Heart left ventricle (tissue), 16 donors: ENCODE measurements at regions of chr5 and their contacts with region 1.

Region 1: DNA sequence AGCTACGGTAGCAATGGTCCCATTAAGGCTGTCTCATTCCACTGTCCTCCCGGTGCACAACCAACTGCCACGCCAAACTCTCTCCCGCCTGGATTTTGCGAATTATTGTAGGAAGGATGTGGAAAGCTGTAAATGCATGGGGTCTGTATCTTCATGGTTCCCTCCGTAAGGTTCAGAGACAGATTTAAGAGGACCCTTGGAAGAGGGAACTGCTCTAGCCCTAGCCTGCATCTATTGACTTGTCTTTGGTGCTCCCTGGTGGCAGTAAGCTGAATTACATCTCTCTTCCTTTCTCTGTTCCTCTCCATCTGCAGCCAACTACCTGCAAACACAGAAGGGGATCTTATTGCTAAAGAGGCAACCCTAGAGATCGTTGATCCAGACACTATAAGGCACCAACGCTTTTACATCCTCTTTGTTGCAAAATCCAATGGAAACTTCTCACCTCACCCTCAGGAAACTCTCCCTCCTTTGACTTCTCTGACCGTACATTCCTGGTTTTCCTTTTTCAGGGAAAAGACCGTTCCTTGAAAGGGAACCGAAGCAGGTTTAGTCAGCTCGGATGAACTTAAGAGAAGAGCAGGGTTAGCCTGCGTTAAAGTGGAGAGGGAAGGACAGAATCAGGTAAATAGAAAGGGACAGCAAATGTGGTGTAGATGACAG is 11.9 kb downstream of the CAPSL start:
- DNase-seq: peak in 1 of 5 donors; percentile 10
- ATAC-seq: peak in 3 of 4 donors; percentile 71 to 77 (median 74)
- H3K4me3 ChIP-seq: peak overlapping the region in 1 of 12 donors; percentile 5
- H3K27ac ChIP-seq: no peak overlapping the region
- H3K4me1 ChIP-seq: peaks cover 0 to 13% (median 0%) of the 10 kb centered on the region in 12 donors
- H3K27me3 ChIP-seq: peaks cover 0 to 58% (median 15%) of the 10 kb centered on the region in 9 donors
- CTCF ChIP-seq: peak; percentile 71 to 92 (median 81)
- POLR2A ChIP-seq: no peak

Region 2: GRCh38 chr5:34486160-34486848 is 1440.2 kb before region 1 on chr5:
- intact Hi-C with region 1: loop called in 3 of 10 experiments (anchors 5 to 10 kb)
- DNase-seq: peak; percentile 65 to 85 (median 76)
- ATAC-seq: peak; percentile 45 to 88 (median 70)
- H3K4me3 ChIP-seq: no peak overlapping the region
- H3K27ac ChIP-seq: peak overlapping the region in 1 of 12 donors; percentile 36
- H3K4me1 ChIP-seq: peaks cover 0 to 11% (median 1%) of the 10 kb centered on the region in 12 donors
- H3K27me3 ChIP-seq: peaks cover 0 to 4% (median 0%) of the 10 kb centered on the region in 9 donors
- CTCF ChIP-seq: peak; percentile 74 to 92 (median 85)
- POLR2A ChIP-seq: no peak

Region 3: DNA sequence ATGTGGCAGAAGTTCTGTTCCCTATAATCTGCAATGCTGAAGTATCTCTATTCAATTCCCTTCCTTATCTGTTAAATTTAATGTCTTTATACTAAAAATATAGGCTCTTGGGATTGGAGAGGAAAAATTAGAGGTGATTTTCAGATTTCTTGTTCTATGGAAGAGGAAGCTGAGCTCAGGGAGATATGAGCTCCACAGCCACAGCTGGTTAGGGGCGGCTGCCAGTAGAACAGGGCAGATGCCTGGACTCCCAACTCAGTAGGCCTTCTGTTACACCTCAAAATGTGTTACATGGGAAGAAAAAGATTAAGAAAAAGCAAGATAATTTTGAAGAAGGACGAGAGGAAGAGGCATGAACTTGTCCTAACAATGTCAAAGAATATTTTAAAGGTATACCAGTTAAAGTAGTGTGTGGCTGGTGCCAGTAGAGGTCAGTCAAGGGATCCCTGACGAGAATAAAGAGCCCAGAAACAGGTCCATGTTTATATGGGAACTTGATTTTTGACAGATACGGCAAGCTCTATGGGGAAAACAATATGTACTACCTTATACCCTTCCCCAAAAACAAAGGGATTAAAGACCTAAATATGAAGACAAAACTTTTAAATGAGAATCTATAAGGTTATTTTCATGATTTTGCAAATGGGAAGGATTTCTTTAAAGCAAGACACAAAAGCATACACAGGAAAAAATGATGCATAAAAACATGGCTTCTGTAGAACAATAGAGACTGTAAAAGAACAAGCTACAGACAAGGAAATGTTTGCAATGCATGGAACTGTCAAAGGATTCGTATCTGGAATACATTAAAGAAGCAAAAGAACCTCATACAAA is 968.4 kb before region 1 on chr5:
- intact Hi-C with region 1: loop called in 1 of 10 experiments (anchors 10 kb)
- DNase-seq: no peak
- ATAC-seq: peak in 3 of 4 donors; percentile 62 to 73 (median 65)
- H3K4me3 ChIP-seq: no peak overlapping the region
- H3K27ac ChIP-seq: no peak overlapping the region
- H3K4me1 ChIP-seq: no peaks in the 10 kb centered on the region
- H3K27me3 ChIP-seq: no peaks in the 10 kb centered on the region
- CTCF ChIP-seq: peak; percentile 19 to 60 (median 43)
- POLR2A ChIP-seq: no peak

Region 4: DNA sequence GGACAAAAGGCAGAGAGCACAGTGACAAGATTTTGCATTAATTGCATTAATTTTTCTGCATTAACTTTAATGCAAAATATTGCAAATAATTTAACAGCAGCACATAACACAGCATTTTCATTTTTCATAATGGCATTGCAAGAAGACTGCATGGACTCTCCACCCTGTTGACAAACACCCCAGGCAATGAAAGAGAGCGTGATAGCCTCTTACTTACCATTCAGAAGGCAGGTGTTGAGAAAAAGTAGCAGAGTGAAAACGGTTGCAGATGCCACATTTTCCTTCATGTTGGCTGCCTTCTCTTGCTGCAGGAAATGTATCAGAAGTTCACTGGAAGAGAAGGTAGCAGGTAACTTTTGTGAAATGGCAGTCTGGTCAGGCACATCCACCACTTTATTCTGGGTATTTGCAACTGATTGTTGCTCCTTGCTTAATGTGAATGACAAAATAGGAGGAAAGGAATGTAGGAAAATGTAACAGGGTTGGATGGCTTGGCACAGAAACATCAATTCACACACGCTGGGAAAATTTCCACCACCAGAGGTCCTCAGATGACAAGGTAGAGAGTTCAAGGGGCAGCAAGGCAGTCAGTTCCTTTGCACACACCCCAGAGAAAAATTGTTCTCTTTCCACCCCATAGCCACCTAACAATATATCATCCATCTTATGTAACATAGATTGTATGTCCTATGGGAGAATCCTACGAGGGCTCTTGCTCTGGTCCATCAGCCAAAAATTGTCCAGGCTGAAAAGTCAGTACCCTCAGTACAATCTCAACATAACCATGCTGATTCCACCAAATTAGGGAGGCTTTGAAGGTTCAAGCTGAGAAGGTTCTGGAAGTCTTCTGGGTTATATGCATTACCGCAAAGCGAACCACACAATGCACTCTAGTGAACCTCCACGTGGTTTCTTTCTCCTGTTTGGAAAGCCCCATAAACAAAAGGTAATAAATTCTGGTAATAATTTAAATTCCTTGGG is 836.9 kb before region 1 on chr5:
- intact Hi-C with region 1: loop called in 8 of 10 experiments (anchors 2 to 10 kb)
- DNase-seq: peak in 3 of 5 donors; percentile 15 to 29 (median 24)
- ATAC-seq: peak in 1 of 4 donors; percentile 7
- H3K4me3 ChIP-seq: no peak overlapping the region
- H3K27ac ChIP-seq: no peak overlapping the region
- H3K4me1 ChIP-seq: no peaks in the 10 kb centered on the region
- H3K27me3 ChIP-seq: no peaks in the 10 kb centered on the region
- CTCF ChIP-seq: peak; percentile 42 to 72 (median 58)
- POLR2A ChIP-seq: no peak

Region 5: GRCh38 chr5:35617435-35618303 is 308.9 kb before region 1 on chr5 and contains the start of gene SPEF2:
- intact Hi-C with region 1: loop called (anchors 1 to 10 kb)
- DNase-seq: peak; percentile 77 to 86 (median 81)
- ATAC-seq: peak; percentile 98 to 100 (median 100)
- H3K4me3 ChIP-seq: peak within 1 kb of the TSS; percentile 57 to 86 (median 78)
- H3K27ac ChIP-seq: peak within 1 kb of the TSS in 3 of 12 donors; percentile 18 to 39 (median 35)
- H3K4me1 ChIP-seq: peaks cover 0 to 17% (median 7%) of the 10 kb centered on the region in 12 donors
- H3K27me3 ChIP-seq: no peaks in the 10 kb centered on the region
- CTCF ChIP-seq: peak; percentile 54 to 93 (median 70)
- POLR2A ChIP-seq: no peak
- total RNA-seq, gene SPEF2: 0.69 to 4.1 (median 1.5) TPM

Region 6: DNA sequence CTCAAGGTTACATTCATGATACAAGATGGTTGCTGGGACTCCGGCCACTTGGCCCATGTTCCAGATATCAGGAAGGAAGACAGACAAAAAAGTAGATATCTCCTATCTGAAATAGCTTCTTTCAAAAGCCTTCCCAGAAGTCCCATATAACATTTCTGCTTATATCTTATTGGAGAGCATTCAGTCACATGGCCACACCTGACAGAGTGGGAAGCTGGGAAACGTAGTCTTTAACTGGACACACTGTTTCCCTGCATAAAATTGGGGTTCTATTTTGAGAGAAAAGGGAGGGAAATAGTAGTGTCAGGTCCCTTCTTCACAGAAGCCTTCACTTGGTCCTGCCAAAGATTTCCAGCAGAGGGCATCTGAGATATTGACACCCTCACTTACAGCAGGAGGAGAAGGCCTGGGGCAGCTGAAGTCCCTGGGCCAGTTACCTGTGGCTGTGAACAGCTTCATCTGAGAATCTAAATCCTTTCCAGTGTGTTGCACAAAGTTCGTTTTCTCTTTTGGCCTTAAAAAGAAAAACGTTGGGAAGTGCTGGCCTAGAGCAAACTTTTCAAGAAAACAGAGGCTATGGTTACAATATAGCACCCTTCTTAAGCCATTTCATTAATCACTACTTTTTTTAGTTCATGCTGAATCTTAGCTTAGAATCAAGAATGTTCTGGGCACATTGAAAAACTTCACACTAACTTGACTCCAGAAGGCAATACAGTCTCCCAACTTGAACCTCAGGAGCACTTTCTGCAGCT is 275.3 kb before region 1 on chr5:
- intact Hi-C with region 1: loop called in 7 of 10 experiments (anchors 5 to 10 kb)
- DNase-seq: peak in 1 of 5 donors; percentile 8
- ATAC-seq: no peak
- H3K4me3 ChIP-seq: no peak overlapping the region
- H3K27ac ChIP-seq: no peak overlapping the region
- H3K4me1 ChIP-seq: no peaks in the 10 kb centered on the region
- H3K27me3 ChIP-seq: no peaks in the 10 kb centered on the region
- CTCF ChIP-seq: peak in 10 of 12 donors; percentile 15 to 42 (median 26)
- POLR2A ChIP-seq: no peak

Region 7: DNA sequence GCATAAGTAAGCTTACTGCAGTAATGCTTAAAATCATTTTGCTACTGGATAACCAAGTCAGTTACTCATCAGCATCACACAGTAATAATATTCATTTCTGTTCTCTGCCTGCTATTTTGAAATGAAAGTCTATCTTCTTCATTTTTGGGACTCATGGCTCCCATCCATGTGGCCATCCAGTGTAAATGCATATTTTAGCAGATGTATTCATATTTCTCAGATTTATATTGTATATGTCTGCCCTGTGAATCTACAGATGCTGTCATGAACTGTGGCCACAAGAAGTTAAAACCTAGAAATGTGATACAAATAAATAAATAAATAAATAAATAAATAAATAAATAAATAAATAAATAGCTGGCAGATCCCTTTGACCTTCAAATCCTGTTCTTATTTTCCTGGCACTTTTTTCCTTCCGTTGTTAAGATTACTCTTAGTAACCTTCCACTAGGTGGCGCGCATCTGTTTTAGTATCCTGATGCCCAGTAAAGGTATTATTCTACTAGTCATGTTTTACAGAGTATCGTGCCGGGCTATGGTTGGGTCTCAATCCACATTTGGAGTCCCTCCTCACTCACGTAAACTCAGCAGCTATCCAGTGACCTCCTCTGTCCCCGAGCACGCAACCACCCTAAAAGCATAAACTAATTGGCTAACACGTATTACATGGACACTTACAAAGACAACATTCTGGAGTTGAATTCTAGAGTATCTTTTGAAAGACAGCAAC is 149.0 kb before region 1 on chr5:
- intact Hi-C with region 1: loop called (anchors 1 to 5 kb)
- DNase-seq: peak in 3 of 5 donors; percentile 44 to 57 (median 56)
- ATAC-seq: peak in 1 of 4 donors; percentile 42
- H3K4me3 ChIP-seq: no peak overlapping the region
- H3K27ac ChIP-seq: no peak overlapping the region
- H3K4me1 ChIP-seq: peaks cover 0 to 23% (median 7%) of the 10 kb centered on the region in 12 donors
- H3K27me3 ChIP-seq: no peaks in the 10 kb centered on the region
- CTCF ChIP-seq: peak; percentile 30 to 70 (median 58)
- POLR2A ChIP-seq: no peak

Region 8: GRCh38 chr5:35979715-35980114 is 53.2 kb after region 1 on chr5:
- intact Hi-C with region 1: no loop called
- DNase-seq: no peak
- ATAC-seq: no peak
- H3K4me3 ChIP-seq: no peak overlapping the region
- H3K27ac ChIP-seq: no peak overlapping the region
- H3K4me1 ChIP-seq: no peaks in the 10 kb centered on the region
- H3K27me3 ChIP-seq: no peaks in the 10 kb centered on the region
- CTCF ChIP-seq: no peak
- POLR2A ChIP-seq: no peak